ENCODE measurements at regions of chr19 and their contacts with region 1.

Region 1: DNA sequence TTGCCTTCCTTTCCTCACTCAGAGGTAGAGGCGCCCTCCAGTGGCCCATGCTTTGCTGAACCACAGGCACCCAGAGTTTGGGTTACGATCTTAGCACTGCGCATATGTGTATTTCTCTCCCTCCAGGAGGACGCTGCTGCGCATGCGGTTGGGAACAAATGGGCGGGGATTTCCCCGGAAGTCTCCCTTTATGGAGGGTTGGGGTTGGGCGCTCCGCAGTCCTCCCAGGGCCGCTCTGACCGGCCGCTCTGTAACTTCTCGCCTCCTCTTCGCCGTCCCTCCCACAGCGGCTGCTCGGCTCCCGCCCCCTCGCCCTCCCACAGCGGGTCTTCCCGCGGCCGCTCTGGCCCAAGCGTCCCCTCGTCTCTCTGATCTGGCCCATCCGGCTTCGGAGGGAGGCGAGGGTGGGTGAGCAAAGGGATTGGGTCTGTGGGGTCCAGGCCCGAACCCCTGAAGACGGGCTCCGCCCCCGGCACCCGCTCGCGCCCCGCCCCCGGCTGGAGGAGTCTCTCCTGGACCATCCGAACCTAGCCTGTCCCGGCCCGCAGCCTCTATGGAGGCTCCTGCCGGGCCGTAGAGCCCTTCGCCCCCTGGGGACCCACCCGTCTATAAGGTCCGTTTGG is at the start of gene MEGF8:
- DNase-seq: peak; percentile 99
- ATAC-seq: peak; percentile 91
- H3K4me3 ChIP-seq: peak within 1 kb of the TSS; percentile 61 to 99 (median 93)
- H3K4me3 Mint-ChIP-seq: peak within 1 kb of the TSS; percentile 88
- H3K27ac ChIP-seq: peak within 1 kb of the TSS; percentile 53 to 69
- H3K27ac Mint-ChIP-seq: peak within 1 kb of the TSS; percentile 90
- H3K4me1 ChIP-seq: peaks cover 28 to 31% of the 10 kb centered on the region in 2 donors
- H3K4me1 Mint-ChIP-seq: peaks cover 22% of the 10 kb centered on the region
- H3K27me3 ChIP-seq: peaks cover 0 to 23% (median 3%) of the 10 kb centered on the region in 4 experiments
- H3K27me3 Mint-ChIP-seq: peaks cover 10% of the 10 kb centered on the region
- CTCF ChIP-seq: peak; percentile 86
- total RNA-seq, gene MEGF8: 26.5 and 26.6 TPM in 2 replicates

Region 2: GRCh38 chr19:42075616-42076379 is 249.6 kb before region 1 on chr19 and contains the start of gene ZNF574:
- CTCF ChIA-PET with region 1: no interaction called
- POLR2A ChIA-PET with region 1: no interaction called
- intact Hi-C with region 1: loop called (anchors 1 kb)
- DNase-seq: peak; percentile 100
- ATAC-seq: peak; percentile 94
- H3K4me3 ChIP-seq: peak within 1 kb of the TSS; percentile 56 to 93 (median 86)
- H3K4me3 Mint-ChIP-seq: peak within 1 kb of the TSS; percentile 97
- H3K27ac ChIP-seq: peak within 1 kb of the TSS; percentile 95 to 99
- H3K27ac Mint-ChIP-seq: peak within 1 kb of the TSS; percentile 99
- H3K4me1 ChIP-seq: peaks cover 20 to 23% of the 10 kb centered on the region in 2 donors
- H3K4me1 Mint-ChIP-seq: peaks cover 35% of the 10 kb centered on the region
- H3K27me3 ChIP-seq: no peaks in the 10 kb centered on the region
- H3K27me3 Mint-ChIP-seq: peaks cover 5% of the 10 kb centered on the region
- CTCF ChIP-seq: no peak
- total RNA-seq, gene ZNF574: 27.4 and 28.4 TPM in 2 replicates

Region 3: GRCh38 chr19:42219812-42220750 is 105.3 kb before region 1 on chr19 and contains the start of gene ZNF526:
- CTCF ChIA-PET with region 1: no interaction called
- POLR2A ChIA-PET with region 1: no interaction called
- intact Hi-C with region 1: loop called (anchors 1 kb)
- DNase-seq: peak; percentile 97
- ATAC-seq: peak; percentile 82
- H3K4me3 ChIP-seq: peak within 1 kb of the TSS; percentile 72 to 96 (median 85)
- H3K4me3 Mint-ChIP-seq: peak within 1 kb of the TSS; percentile 96
- H3K27ac ChIP-seq: peak within 1 kb of the TSS; percentile 66 to 88
- H3K27ac Mint-ChIP-seq: peak within 1 kb of the TSS; percentile 92
- H3K4me1 ChIP-seq: peaks cover 41 to 51% of the 10 kb centered on the region in 2 donors
- H3K4me1 Mint-ChIP-seq: peaks cover 59% of the 10 kb centered on the region
- H3K27me3 ChIP-seq: no peaks in the 10 kb centered on the region
- H3K27me3 Mint-ChIP-seq: no peaks in the 10 kb centered on the region
- CTCF ChIP-seq: no peak
- total RNA-seq, gene ZNF526: 19.0 and 21.3 TPM in 2 replicates

Region 4: GRCh38 chr19:42233106-42233505 is 92.3 kb before region 1 on chr19:
- CTCF ChIA-PET with region 1: no interaction called
- POLR2A ChIA-PET with region 1: no interaction called
- intact Hi-C with region 1: no loop called
- DNase-seq: no peak
- ATAC-seq: no peak
- H3K4me3 ChIP-seq: no peak overlapping the region
- H3K4me3 Mint-ChIP-seq: no peak overlapping the region
- H3K27ac ChIP-seq: no peak overlapping the region
- H3K27ac Mint-ChIP-seq: no peak overlapping the region
- H3K4me1 ChIP-seq: no peaks in the 10 kb centered on the region
- H3K4me1 Mint-ChIP-seq: peaks cover 7% of the 10 kb centered on the region
- H3K27me3 ChIP-seq: no peaks in the 10 kb centered on the region
- H3K27me3 Mint-ChIP-seq: no peaks in the 10 kb centered on the region
- CTCF ChIP-seq: no peak

Region 5: GRCh38 chr19:42283143-42284065 is 42.0 kb before region 1 on chr19:
- CTCF ChIA-PET with region 1: interaction called, 5 read pairs
- POLR2A ChIA-PET with region 1: no interaction called
- intact Hi-C with region 1: loop called (anchors 1 kb)
- DNase-seq: peak; percentile 98
- ATAC-seq: peak; percentile 64
- H3K4me3 ChIP-seq: peak overlapping the region; percentile 41 to 72 (median 65)
- H3K4me3 Mint-ChIP-seq: no peak overlapping the region
- H3K27ac ChIP-seq: peak overlapping the region; percentile 91 to 96
- H3K27ac Mint-ChIP-seq: no peak overlapping the region
- H3K4me1 ChIP-seq: peaks cover 53 to 65% of the 10 kb centered on the region in 2 donors
- H3K4me1 Mint-ChIP-seq: peaks cover 37% of the 10 kb centered on the region
- H3K27me3 ChIP-seq: no peaks in the 10 kb centered on the region
- H3K27me3 Mint-ChIP-seq: no peaks in the 10 kb centered on the region
- CTCF ChIP-seq: no peak

Region 6: GRCh38 chr19:42386974-42387707 is 61.8 kb after region 1 on chr19:
- CTCF ChIA-PET with region 1: interaction called, 3 read pairs
- POLR2A ChIA-PET with region 1: interaction called, 10 read pairs
- intact Hi-C with region 1: loop called (anchors 1 kb)
- DNase-seq: peak; percentile 90
- ATAC-seq: peak; percentile 93
- H3K4me3 ChIP-seq: peak overlapping the region in 4 of 5 experiments; percentile 53 to 68 (median 64)
- H3K4me3 Mint-ChIP-seq: peak overlapping the region; percentile 86
- H3K27ac ChIP-seq: peak overlapping the region; percentile 23 to 33
- H3K27ac Mint-ChIP-seq: peak overlapping the region; percentile 80
- H3K4me1 ChIP-seq: peaks cover 5 to 12% of the 10 kb centered on the region in 2 donors
- H3K4me1 Mint-ChIP-seq: peaks cover 7% of the 10 kb centered on the region
- H3K27me3 ChIP-seq: peaks cover 0 to 18% (median 6%) of the 10 kb centered on the region in 4 experiments
- H3K27me3 Mint-ChIP-seq: peaks cover 26% of the 10 kb centered on the region
- CTCF ChIP-seq: peak; percentile 74

Region 7: DNA sequence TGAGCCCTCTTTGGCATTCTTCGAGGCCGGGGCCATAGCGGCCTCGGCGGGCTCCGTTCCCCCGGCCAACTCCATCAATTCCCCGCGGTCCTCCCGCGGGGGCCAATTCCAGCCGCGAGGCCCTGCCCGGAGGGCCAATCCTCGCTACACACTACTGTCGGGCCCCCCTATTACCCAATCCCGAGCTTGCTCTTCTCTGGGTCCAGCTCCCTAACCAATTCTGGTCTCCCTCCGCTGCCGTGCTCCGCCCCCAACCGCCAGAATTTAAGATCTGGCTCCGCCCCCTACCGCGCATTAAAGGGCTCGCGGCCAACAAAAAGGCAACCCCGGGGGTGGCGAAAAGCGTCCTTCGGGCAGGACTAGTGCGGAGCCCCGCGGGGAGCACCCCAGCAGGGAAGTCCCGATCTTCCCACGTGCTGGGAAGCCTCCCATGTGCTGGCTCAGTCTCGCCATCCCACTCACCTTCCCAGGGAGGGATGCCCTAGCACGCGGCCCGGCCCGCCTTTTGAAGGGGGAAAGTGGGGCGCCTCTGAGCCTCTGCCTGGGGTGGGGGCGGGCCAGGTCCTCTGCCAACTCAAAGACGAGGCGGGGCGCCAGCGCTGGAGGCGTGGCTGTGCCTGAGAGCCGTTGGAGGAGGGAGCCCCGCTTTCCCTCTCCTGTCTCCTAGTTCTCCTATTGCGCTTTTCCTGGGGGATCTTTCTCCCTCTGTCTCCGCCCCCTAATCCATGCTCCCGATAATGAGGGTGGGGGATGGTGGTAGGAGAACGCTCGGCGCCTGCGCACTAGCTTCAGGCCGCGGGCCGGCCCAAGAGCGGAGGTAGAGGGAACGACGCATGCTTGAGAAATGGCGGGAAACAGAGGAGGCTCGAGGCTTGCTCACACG is 98.3 kb after region 1 on chr19:
- CTCF ChIA-PET with region 1: interaction called, 3 read pairs
- POLR2A ChIA-PET with region 1: no interaction called
- intact Hi-C with region 1: loop called (anchors 1 kb)
- DNase-seq: peak; percentile 96
- ATAC-seq: peak; percentile 88
- H3K4me3 ChIP-seq: peak overlapping the region; percentile 75 to 98 (median 85)
- H3K4me3 Mint-ChIP-seq: peak overlapping the region; percentile 98
- H3K27ac ChIP-seq: peak overlapping the region; percentile 78 to 85
- H3K27ac Mint-ChIP-seq: peak overlapping the region; percentile 99
- H3K4me1 ChIP-seq: peaks cover 22 to 40% of the 10 kb centered on the region in 2 donors
- H3K4me1 Mint-ChIP-seq: peaks cover 46% of the 10 kb centered on the region
- H3K27me3 ChIP-seq: peaks cover 0 to 2% (median 0%) of the 10 kb centered on the region in 4 experiments
- H3K27me3 Mint-ChIP-seq: no peaks in the 10 kb centered on the region
- CTCF ChIP-seq: no peak

Region 8: GRCh38 chr19:43148233-43148632 is 822.8 kb after region 1 on chr19:
- CTCF ChIA-PET with region 1: no interaction called
- POLR2A ChIA-PET with region 1: no interaction called
- intact Hi-C with region 1: no loop called
- DNase-seq: no peak
- ATAC-seq: no peak
- H3K4me3 ChIP-seq: no peak overlapping the region
- H3K4me3 Mint-ChIP-seq: no peak overlapping the region
- H3K27ac ChIP-seq: no peak overlapping the region
- H3K27ac Mint-ChIP-seq: no peak overlapping the region
- H3K4me1 ChIP-seq: no peaks in the 10 kb centered on the region
- H3K4me1 Mint-ChIP-seq: peaks cover 2% of the 10 kb centered on the region
- H3K27me3 ChIP-seq: no peaks in the 10 kb centered on the region
- H3K27me3 Mint-ChIP-seq: peaks cover 9% of the 10 kb centered on the region
- CTCF ChIP-seq: no peak